CD8-positive, alpha-beta T cell (primary cell): ENCODE measurements at regions of chr4 and their contacts with region 1.

Region 1: GRCh38 chr4:144174401-144175067 is 34.0 kb upstream of the GYPA start:
- DNase-seq: peak in 4 of 9 experiments; percentile 6 to 64 (median 34)
- ATAC-seq: peak; percentile 61
- H3K4me3 ChIP-seq: no peak overlapping the region
- H3K4me3 Mint-ChIP-seq: no peak overlapping the region
- H3K27ac ChIP-seq: no peak overlapping the region
- H3K27ac Mint-ChIP-seq: no peak overlapping the region
- H3K4me1 ChIP-seq: peaks cover 3% of the 10 kb centered on the region
- H3K4me1 Mint-ChIP-seq: peaks cover 2% of the 10 kb centered on the region
- H3K27me3 ChIP-seq: no peaks in the 10 kb centered on the region
- H3K27me3 Mint-ChIP-seq: peaks cover 6% of the 10 kb centered on the region
- CTCF ChIP-seq: peak; percentile 54

Region 2: GRCh38 chr4:144104509-144105130 is 69.9 kb before region 1 on chr4:
- CTCF ChIA-PET with region 1: no interaction called
- POLR2A ChIA-PET with region 1: no interaction called
- intact Hi-C with region 1: no loop called
- DNase-seq: no peak
- ATAC-seq: no peak
- H3K4me3 ChIP-seq: no peak overlapping the region
- H3K4me3 Mint-ChIP-seq: no peak overlapping the region
- H3K27ac ChIP-seq: no peak overlapping the region
- H3K27ac Mint-ChIP-seq: no peak overlapping the region
- H3K4me1 ChIP-seq: no peaks in the 10 kb centered on the region
- H3K4me1 Mint-ChIP-seq: no peaks in the 10 kb centered on the region
- H3K27me3 ChIP-seq: no peaks in the 10 kb centered on the region
- H3K27me3 Mint-ChIP-seq: no peaks in the 10 kb centered on the region
- CTCF ChIP-seq: no peak

Region 3: DNA sequence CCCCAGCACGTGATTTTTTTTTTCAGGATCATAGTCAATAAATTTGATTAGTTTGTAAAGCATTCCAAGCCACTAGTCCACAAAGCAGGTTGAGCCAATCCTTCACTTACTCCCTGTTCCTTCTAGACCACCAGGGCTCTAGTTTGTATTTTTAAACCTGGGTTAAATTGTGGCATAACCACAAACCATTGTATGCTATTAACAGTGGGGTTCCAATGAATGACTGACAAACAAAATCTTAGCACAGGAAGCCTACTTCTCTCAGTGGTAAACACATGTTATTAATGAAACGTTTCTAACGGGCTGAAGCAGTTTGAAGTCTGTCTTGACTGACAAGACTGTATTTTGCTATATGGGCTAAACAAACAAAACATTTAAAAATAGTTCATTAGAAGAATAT is 14.6 kb after region 1 on chr4:
- CTCF ChIA-PET with region 1: no interaction called
- POLR2A ChIA-PET with region 1: no interaction called
- intact Hi-C with region 1: no loop called
- DNase-seq: no peak
- ATAC-seq: no peak
- H3K4me3 ChIP-seq: no peak overlapping the region
- H3K4me3 Mint-ChIP-seq: no peak overlapping the region
- H3K27ac ChIP-seq: no peak overlapping the region
- H3K27ac Mint-ChIP-seq: no peak overlapping the region
- H3K4me1 ChIP-seq: no peaks in the 10 kb centered on the region
- H3K4me1 Mint-ChIP-seq: no peaks in the 10 kb centered on the region
- H3K27me3 ChIP-seq: no peaks in the 10 kb centered on the region
- H3K27me3 Mint-ChIP-seq: peaks cover 4% of the 10 kb centered on the region
- CTCF ChIP-seq: no peak

Region 4: DNA sequence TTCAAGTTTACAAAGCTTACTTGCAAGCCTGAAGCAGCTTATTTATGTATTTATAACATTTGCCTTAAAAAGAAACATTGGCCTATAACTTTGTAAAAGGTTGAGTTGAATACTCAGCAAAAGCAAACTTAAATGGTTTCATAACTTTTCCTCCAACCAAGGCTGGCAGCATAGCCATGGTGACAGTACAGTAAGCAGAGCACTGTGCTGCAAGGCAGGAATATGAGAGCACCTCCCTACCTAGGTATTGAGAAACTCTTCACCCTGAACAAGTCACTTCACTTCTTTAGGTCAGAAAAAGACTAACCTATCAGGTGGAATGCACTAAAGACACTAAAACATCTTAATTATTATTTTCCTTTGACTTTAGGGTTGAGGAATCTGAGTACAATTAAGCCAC is 29.9 kb after region 1 on chr4:
- CTCF ChIA-PET with region 1: no interaction called
- POLR2A ChIA-PET with region 1: no interaction called
- intact Hi-C with region 1: no loop called
- DNase-seq: no peak
- ATAC-seq: no peak
- H3K4me3 ChIP-seq: no peak overlapping the region
- H3K4me3 Mint-ChIP-seq: no peak overlapping the region
- H3K27ac ChIP-seq: no peak overlapping the region
- H3K27ac Mint-ChIP-seq: no peak overlapping the region
- H3K4me1 ChIP-seq: no peaks in the 10 kb centered on the region
- H3K4me1 Mint-ChIP-seq: no peaks in the 10 kb centered on the region
- H3K27me3 ChIP-seq: no peaks in the 10 kb centered on the region
- H3K27me3 Mint-ChIP-seq: no peaks in the 10 kb centered on the region
- CTCF ChIP-seq: no peak

Region 5: GRCh38 chr4:144787365-144788258 is 613.1 kb after region 1 on chr4:
- CTCF ChIA-PET with region 1: no interaction called
- POLR2A ChIA-PET with region 1: no interaction called
- intact Hi-C with region 1: loop called (anchors 2 to 10 kb)
- DNase-seq: peak in 1 of 9 experiments; percentile 14
- ATAC-seq: no peak
- H3K4me3 ChIP-seq: no peak overlapping the region
- H3K4me3 Mint-ChIP-seq: no peak overlapping the region
- H3K27ac ChIP-seq: no peak overlapping the region
- H3K27ac Mint-ChIP-seq: no peak overlapping the region
- H3K4me1 ChIP-seq: no peaks in the 10 kb centered on the region
- H3K4me1 Mint-ChIP-seq: no peaks in the 10 kb centered on the region
- H3K27me3 ChIP-seq: no peaks in the 10 kb centered on the region
- H3K27me3 Mint-ChIP-seq: no peaks in the 10 kb centered on the region
- CTCF ChIP-seq: no peak

Region 6: GRCh38 chr4:145061318-145061920 is 886.9 kb after region 1 on chr4:
- CTCF ChIA-PET with region 1: interaction called, 3 read pairs
- POLR2A ChIA-PET with region 1: no interaction called
- intact Hi-C with region 1: loop called in 1 of 2 experiments (anchors 1 kb)
- DNase-seq: peak in 2 of 9 experiments; percentile 52 to 65
- ATAC-seq: no peak
- H3K4me3 ChIP-seq: no peak overlapping the region
- H3K4me3 Mint-ChIP-seq: no peak overlapping the region
- H3K27ac ChIP-seq: no peak overlapping the region
- H3K27ac Mint-ChIP-seq: no peak overlapping the region
- H3K4me1 ChIP-seq: peaks cover 3% of the 10 kb centered on the region
- H3K4me1 Mint-ChIP-seq: peaks cover 27% of the 10 kb centered on the region
- H3K27me3 ChIP-seq: no peaks in the 10 kb centered on the region
- H3K27me3 Mint-ChIP-seq: no peaks in the 10 kb centered on the region
- CTCF ChIP-seq: peak; percentile 69

Region 7: DNA sequence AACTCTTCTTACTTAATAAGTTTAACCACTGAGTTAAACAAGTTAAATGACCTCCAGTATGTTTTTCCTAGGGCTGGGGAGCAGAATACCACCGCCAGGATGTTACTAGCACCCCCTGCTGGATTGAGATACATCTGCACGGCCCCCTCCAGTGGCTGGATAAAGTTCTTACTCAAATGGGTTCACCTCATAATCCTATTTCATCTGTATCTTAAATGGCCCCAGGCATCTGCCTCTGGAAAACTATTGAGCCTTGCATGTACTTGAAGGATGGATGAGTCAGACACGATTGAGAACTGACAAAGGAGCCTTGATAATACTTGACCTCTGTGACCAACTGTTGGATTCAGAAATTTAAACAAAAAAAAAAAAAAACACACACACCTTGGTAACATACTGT is 1383.2 kb after region 1 on chr4:
- CTCF ChIA-PET with region 1: no interaction called
- POLR2A ChIA-PET with region 1: no interaction called
- intact Hi-C with region 1: loop called in 1 of 2 experiments (anchors 5 kb)
- DNase-seq: peak in 7 of 9 experiments; percentile 5 to 63 (median 38)
- ATAC-seq: peak; percentile 59
- H3K4me3 ChIP-seq: no peak overlapping the region
- H3K4me3 Mint-ChIP-seq: no peak overlapping the region
- H3K27ac ChIP-seq: no peak overlapping the region
- H3K27ac Mint-ChIP-seq: no peak overlapping the region
- H3K4me1 ChIP-seq: no peaks in the 10 kb centered on the region
- H3K4me1 Mint-ChIP-seq: no peaks in the 10 kb centered on the region
- H3K27me3 ChIP-seq: no peaks in the 10 kb centered on the region
- H3K27me3 Mint-ChIP-seq: peaks cover 5% of the 10 kb centered on the region
- CTCF ChIP-seq: peak; percentile 52

Region 8: GRCh38 chr4:145609481-145610427 is 1435.2 kb after region 1 on chr4:
- CTCF ChIA-PET with region 1: no interaction called
- POLR2A ChIA-PET with region 1: no interaction called
- intact Hi-C with region 1: loop called in 1 of 2 experiments (anchors 2 kb)
- DNase-seq: peak; percentile 32 to 72 (median 53)
- ATAC-seq: peak; percentile 81
- H3K4me3 ChIP-seq: no peak overlapping the region
- H3K4me3 Mint-ChIP-seq: no peak overlapping the region
- H3K27ac ChIP-seq: no peak overlapping the region
- H3K27ac Mint-ChIP-seq: no peak overlapping the region
- H3K4me1 ChIP-seq: no peaks in the 10 kb centered on the region
- H3K4me1 Mint-ChIP-seq: no peaks in the 10 kb centered on the region
- H3K27me3 ChIP-seq: no peaks in the 10 kb centered on the region
- H3K27me3 Mint-ChIP-seq: peaks cover 9% of the 10 kb centered on the region
- CTCF ChIP-seq: peak; percentile 54